MCF 10A (cell line): ENCODE measurements at regions of chr20 and their contacts with region 1.

Region 1: GRCh38 chr20:45971675-45972499 is at the start of gene ZNF335:
- DNase-seq: peak; percentile 92
- H3K4me3 Mint-ChIP-seq: peak within 1 kb of the TSS; percentile 71
- H3K27ac Mint-ChIP-seq: peak within 1 kb of the TSS; percentile 100
- H3K4me1 Mint-ChIP-seq: peaks cover 25% of the 10 kb centered on the region
- H3K27me3 Mint-ChIP-seq: no peaks in the 10 kb centered on the region
- CTCF ChIP-seq: no peak
- total RNA-seq, gene ZNF335: 24.2 and 26.9 TPM in 2 replicates

Region 2: DNA sequence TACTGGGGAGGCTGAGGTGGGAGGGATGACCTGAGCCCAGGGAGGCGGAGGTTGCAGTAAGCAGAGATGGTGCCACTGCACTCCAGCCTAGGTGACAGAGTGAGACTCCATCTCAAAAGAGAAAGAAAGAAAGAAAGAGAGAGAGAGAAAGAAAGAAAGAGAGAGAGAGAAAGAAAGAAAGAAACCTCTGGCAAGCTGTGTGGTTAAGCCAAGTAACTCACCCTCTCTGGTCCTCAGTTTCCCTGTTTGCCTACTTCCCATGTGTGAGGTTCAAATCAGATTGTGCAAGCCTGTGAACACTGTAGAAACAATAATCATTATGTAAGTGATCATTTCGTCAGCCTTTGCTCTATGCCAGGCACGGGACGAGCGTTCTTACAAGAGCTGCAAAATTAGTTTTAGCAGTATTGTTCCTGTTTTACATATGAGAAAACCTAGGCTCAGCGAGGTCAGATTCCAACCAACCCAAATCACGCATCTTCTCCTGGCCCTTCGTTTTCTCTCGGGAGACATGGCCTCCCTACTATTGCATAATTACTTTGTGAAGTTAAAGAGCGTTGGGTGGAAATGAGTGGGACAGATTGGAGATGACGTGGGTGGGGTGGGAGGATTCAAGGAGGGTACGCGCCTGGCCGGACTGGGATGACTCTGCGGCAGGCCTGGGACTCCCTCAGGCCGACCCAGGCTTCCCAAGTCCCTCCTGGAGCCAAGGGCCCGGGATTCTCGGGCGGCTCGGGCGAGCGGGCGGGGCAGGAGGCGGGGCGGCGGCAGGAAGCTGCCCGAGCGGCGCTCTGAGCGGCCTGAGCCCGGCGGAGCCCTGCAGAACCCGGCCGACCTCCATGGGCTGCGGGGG is 138.6 kb before region 1 on chr20 and contains the start of gene SNX21:
- CTCF ChIA-PET with region 1: interaction called, 5 read pairs
- POLR2A ChIA-PET with region 1: interaction called, 14 read pairs
- intact Hi-C with region 1: no loop called
- DNase-seq: peak; percentile 83
- H3K4me3 Mint-ChIP-seq: peak within 1 kb of the TSS; percentile 80
- H3K27ac Mint-ChIP-seq: peak within 1 kb of the TSS; percentile 84
- H3K4me1 Mint-ChIP-seq: peaks cover 26% of the 10 kb centered on the region
- H3K27me3 Mint-ChIP-seq: no peaks in the 10 kb centered on the region
- CTCF ChIP-seq: no peak
- total RNA-seq, gene SNX21: 8.5 and 13.9 TPM in 2 replicates

Region 3: DNA sequence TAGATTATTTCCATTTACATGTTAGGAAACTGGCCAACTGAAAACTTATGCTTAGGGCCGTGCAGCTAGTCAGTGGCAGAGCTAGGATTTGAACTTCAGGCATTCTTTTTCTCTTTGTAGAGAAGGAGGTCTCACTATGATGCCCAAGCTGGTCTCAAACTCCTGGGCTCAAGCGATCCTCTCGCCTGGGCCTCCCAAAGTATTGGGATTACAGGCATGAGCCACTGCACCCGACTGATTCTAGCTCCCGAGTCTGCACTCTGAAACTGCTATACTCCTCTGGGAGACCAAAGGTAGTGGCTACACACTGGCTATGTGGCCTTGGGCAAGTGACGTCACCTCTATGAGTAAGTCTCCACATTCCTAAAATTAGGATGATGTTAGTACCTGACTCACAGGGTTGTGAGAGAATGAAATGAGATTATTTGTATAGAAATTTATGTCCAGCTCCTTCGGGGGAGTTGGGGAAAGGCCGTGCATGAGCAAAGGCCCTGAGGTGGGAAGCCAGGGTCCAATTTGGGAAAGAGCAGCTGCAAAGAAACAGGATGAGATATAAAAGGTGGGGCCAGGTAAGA is 66.3 kb before region 1 on chr20:
- CTCF ChIA-PET with region 1: interaction called, 5 read pairs
- POLR2A ChIA-PET with region 1: interaction called, 13 read pairs
- intact Hi-C with region 1: no loop called
- DNase-seq: peak; percentile 91
- H3K4me3 Mint-ChIP-seq: peak overlapping the region; percentile 2
- H3K27ac Mint-ChIP-seq: peak overlapping the region; percentile 55
- H3K4me1 Mint-ChIP-seq: peaks cover 9% of the 10 kb centered on the region
- H3K27me3 Mint-ChIP-seq: no peaks in the 10 kb centered on the region
- CTCF ChIP-seq: no peak

Region 4: DNA sequence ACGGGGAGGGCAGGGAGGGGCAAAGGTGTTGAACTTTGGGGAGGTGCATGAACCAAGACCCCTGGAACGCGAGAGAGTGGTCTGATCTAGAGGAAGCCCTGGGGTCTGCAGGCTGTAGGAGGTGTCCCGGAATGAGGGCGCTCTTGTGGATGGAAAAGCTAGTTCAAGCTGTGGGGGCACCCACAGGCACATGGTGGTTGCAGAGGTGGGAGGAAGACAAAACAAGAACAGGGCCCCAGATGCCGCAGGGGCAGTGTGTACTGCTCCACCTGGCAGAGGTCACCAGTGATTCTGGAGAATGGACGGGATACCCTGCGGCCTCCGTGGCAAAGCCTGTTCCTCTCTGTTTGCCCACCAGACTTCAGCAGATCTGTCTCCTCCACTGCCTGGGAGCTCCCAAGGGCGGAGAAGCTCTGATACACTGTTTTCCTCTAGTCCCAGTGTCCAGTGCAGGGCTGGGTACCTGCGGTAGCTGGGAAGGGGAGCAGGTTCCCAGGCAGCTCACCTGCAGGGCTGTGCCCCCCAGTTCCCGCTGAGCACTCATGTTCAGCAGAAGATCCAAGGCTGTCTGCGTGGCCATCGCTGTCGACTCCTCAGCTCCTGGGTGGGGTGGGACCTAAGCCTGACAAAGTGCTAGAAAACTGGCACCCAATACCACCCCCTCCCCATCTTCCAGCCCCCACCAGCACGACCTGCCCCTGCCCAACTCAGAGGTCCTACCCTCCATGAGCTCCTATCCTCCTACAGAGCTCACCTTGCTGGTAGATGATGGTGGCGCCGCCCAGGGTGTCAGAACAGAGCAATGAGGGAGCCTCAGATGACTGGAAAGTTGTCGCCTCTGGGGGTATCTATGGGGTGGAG is 14.6 kb before region 1 on chr20:
- CTCF ChIA-PET with region 1: interaction called, 76 read pairs
- POLR2A ChIA-PET with region 1: interaction called, 29 read pairs
- intact Hi-C with region 1: no loop called
- DNase-seq: no peak
- H3K4me3 Mint-ChIP-seq: no peak overlapping the region
- H3K27ac Mint-ChIP-seq: no peak overlapping the region
- H3K4me1 Mint-ChIP-seq: no peaks in the 10 kb centered on the region
- H3K27me3 Mint-ChIP-seq: no peaks in the 10 kb centered on the region
- CTCF ChIP-seq: no peak

Region 5: GRCh38 chr20:46004889-46005473 is 33.1 kb after region 1 on chr20:
- CTCF ChIA-PET with region 1: interaction called, 15 read pairs
- POLR2A ChIA-PET with region 1: interaction called, 3 read pairs
- intact Hi-C with region 1: no loop called
- DNase-seq: peak; percentile 37
- H3K4me3 Mint-ChIP-seq: no peak overlapping the region
- H3K27ac Mint-ChIP-seq: no peak overlapping the region
- H3K4me1 Mint-ChIP-seq: peaks cover 7% of the 10 kb centered on the region
- H3K27me3 Mint-ChIP-seq: no peaks in the 10 kb centered on the region
- CTCF ChIP-seq: no peak

Region 6: GRCh38 chr20:46117704-46118467 is 146.0 kb after region 1 on chr20 and contains the start of gene CD40:
- CTCF ChIA-PET with region 1: no interaction called
- POLR2A ChIA-PET with region 1: no interaction called
- intact Hi-C with region 1: no loop called
- DNase-seq: peak; percentile 66
- H3K4me3 Mint-ChIP-seq: peak within 1 kb of the TSS; percentile 78
- H3K27ac Mint-ChIP-seq: no peak within 1 kb of the TSS
- H3K4me1 Mint-ChIP-seq: peaks cover 7% of the 10 kb centered on the region
- H3K27me3 Mint-ChIP-seq: peaks cover 11% of the 10 kb centered on the region
- CTCF ChIP-seq: no peak
- total RNA-seq, gene CD40: 1.5 and 2.3 TPM in 2 replicates